Caco-2 (cell line): ENCODE measurements at regions of chr18 and their contacts with region 1.

Region 1: GRCh38 chr18:54254265-54254770 is 15.0 kb upstream of the POLI start:
- DNase-seq: peak; percentile 66 to 69
- H3K4me3 ChIP-seq: peak overlapping the region; percentile 12
- H3K4me3 Mint-ChIP-seq: peak overlapping the region; percentile 76
- H3K27ac Mint-ChIP-seq: peak overlapping the region; percentile 91
- H3K4me1 ChIP-seq: peaks cover 24% of the 10 kb centered on the region
- H3K4me1 Mint-ChIP-seq: peaks cover 6% of the 10 kb centered on the region
- H3K27me3 ChIP-seq: no peaks in the 10 kb centered on the region
- H3K27me3 Mint-ChIP-seq: no peaks in the 10 kb centered on the region
- CTCF ChIP-seq: no peak

Region 2: GRCh38 chr18:54224379-54225014 is 29.8 kb before region 1 on chr18 and contains the start of gene MBD2:
- CTCF ChIA-PET with region 1: interaction called, 6 read pairs
- POLR2A ChIA-PET with region 1: interaction called, 4 read pairs
- intact Hi-C with region 1: loop called (anchors 1 kb)
- DNase-seq: peak; percentile 90 to 92
- H3K4me3 ChIP-seq: peak within 1 kb of the TSS; percentile 58
- H3K4me3 Mint-ChIP-seq: peak within 1 kb of the TSS; percentile 84
- H3K27ac Mint-ChIP-seq: peak within 1 kb of the TSS; percentile 67
- H3K4me1 ChIP-seq: peaks cover 5% of the 10 kb centered on the region
- H3K4me1 Mint-ChIP-seq: peaks cover 7% of the 10 kb centered on the region
- H3K27me3 ChIP-seq: no peaks in the 10 kb centered on the region
- H3K27me3 Mint-ChIP-seq: no peaks in the 10 kb centered on the region
- CTCF ChIP-seq: peak in 1 of 2 experiments; percentile 35
- total RNA-seq, gene MBD2: 19.9 and 23.2 TPM in 2 replicates

Region 3: GRCh38 chr18:54232485-54233227 is 21.7 kb before region 1 on chr18:
- CTCF ChIA-PET with region 1: no interaction called
- POLR2A ChIA-PET with region 1: no interaction called
- intact Hi-C with region 1: loop called (anchors 1 kb)
- DNase-seq: no peak
- H3K4me3 ChIP-seq: no peak overlapping the region
- H3K4me3 Mint-ChIP-seq: no peak overlapping the region
- H3K27ac Mint-ChIP-seq: no peak overlapping the region
- H3K4me1 ChIP-seq: no peaks in the 10 kb centered on the region
- H3K4me1 Mint-ChIP-seq: peaks cover 21% of the 10 kb centered on the region
- H3K27me3 ChIP-seq: no peaks in the 10 kb centered on the region
- H3K27me3 Mint-ChIP-seq: no peaks in the 10 kb centered on the region
- CTCF ChIP-seq: no peak